ENCODE measurements at regions of chr1 and their contacts with region 1.

Region 1: DNA sequence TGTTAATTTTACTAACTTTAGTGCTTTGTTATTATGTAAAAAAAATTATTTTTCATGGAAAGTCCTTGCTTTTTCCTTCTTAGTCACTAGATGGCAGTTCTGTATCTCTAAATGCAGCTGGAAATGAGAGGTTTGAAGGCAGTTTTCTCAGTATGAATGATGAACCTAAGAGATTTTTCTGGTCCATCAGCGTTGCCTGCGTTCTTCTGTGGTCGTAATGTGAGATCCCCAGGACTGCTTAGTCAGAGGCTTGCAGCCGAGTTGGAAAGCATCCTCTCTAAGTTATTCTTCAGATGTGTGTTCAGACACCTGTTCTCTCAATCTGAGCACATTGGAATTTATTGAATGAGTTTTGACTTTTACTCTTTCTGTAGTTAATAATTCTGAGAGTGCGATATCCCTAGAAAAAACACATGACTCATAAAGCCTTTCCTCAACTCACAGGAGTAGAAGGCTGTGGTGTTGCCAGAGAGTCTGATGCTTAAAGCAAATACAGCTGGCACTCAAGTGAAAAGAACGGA is 99.3 kb downstream of the FMN2 start:
- DNase-seq: no peak
- H3K4me3 ChIP-seq: no peak overlapping the region
- H3K27ac ChIP-seq: no peak overlapping the region
- H3K4me1 ChIP-seq: no peaks in the 10 kb centered on the region
- H3K27me3 ChIP-seq: no peaks in the 10 kb centered on the region
- CTCF ChIP-seq: peak in 2 of 3 experiments; percentile 15 to 26
- POLR2A ChIP-seq: no peak

Region 2: GRCh38 chr1:240691521-240692338 is 500.8 kb after region 1 on chr1:
- intact Hi-C with region 1: loop called (anchors 5 kb)
- DNase-seq: peak; percentile 55
- H3K4me3 ChIP-seq: no peak overlapping the region
- H3K27ac ChIP-seq: no peak overlapping the region
- H3K4me1 ChIP-seq: no peaks in the 10 kb centered on the region
- H3K27me3 ChIP-seq: no peaks in the 10 kb centered on the region
- CTCF ChIP-seq: peak in 2 of 3 experiments; percentile 29 to 48
- POLR2A ChIP-seq: no peak

Measured in testis (tissue), 5 donors.